Activated CD4-positive, alpha-beta T cell treated with anti-CD3 and anti-CD28 coated beads, Interleukin-2, amount 10 ng/mL, durations not matched to agents 24 days and 14 days (primary cell): ENCODE measurements at regions of chr22 and their contacts with region 1.

Region 1: GRCh38 chr22:26756675-26757293 is 99.4 kb downstream of the MIAT start:
- DNase-seq: peak; percentile 90
- H3K4me3 Mint-ChIP-seq: no peak overlapping the region
- H3K27ac Mint-ChIP-seq: no peak overlapping the region
- H3K4me1 Mint-ChIP-seq: peaks cover 2% of the 10 kb centered on the region
- H3K27me3 Mint-ChIP-seq: no peaks in the 10 kb centered on the region

Region 2: GRCh38 chr22:27804470-27805297 is 1047.9 kb after region 1 on chr22:
- intact Hi-C with region 1: loop called (anchors 5 kb)
- DNase-seq: peak; percentile 84
- H3K4me3 Mint-ChIP-seq: no peak overlapping the region
- H3K27ac Mint-ChIP-seq: no peak overlapping the region
- H3K4me1 Mint-ChIP-seq: peaks cover 8% of the 10 kb centered on the region
- H3K27me3 Mint-ChIP-seq: peaks cover 39% of the 10 kb centered on the region